ENCODE measurements at regions of chr17 and their contacts with region 1.

Region 1: GRCh38 chr17:10705727-10706126 is 8.3 kb downstream of the ADPRM start:
- DNase-seq: no peak
- H3K4me3 ChIP-seq: no peak overlapping the region
- H3K27ac ChIP-seq: no peak overlapping the region
- H3K4me1 ChIP-seq: peaks cover 6 to 9% of the 10 kb centered on the region in 2 donors
- H3K27me3 ChIP-seq: no peaks in the 10 kb centered on the region
- CTCF ChIP-seq: no peak
- POLR2A ChIP-seq: no peak

Region 2: DNA sequence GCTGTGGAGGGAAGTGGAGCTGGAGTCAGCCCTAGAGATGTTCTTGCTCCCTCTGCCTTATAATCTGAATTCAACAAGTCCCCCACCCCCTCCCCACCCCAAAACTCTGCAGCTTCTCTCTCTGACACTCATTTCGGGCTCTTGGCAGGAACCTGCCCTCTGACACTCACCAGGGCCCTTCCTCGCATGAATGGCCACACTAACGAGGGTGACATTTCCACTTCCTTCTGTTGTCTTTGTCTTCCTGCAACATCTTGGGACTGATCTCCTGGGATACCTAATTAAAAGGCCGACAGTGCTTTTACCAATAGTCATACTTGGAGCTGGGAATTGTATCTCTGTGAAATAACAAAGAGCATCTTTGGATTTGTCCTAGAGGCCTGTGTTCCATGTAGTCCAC is 239.1 kb after region 1 on chr17:
- intact Hi-C with region 1: no loop called
- DNase-seq: no peak
- H3K4me3 ChIP-seq: no peak overlapping the region
- H3K27ac ChIP-seq: no peak overlapping the region
- H3K4me1 ChIP-seq: no peaks in the 10 kb centered on the region
- H3K27me3 ChIP-seq: no peaks in the 10 kb centered on the region
- CTCF ChIP-seq: no peak
- POLR2A ChIP-seq: no peak

Region 3: GRCh38 chr17:11318207-11318606 is 612.5 kb after region 1 on chr17:
- intact Hi-C with region 1: loop called (anchors 5 kb)
- DNase-seq: no peak
- H3K4me3 ChIP-seq: no peak overlapping the region
- H3K27ac ChIP-seq: no peak overlapping the region
- H3K4me1 ChIP-seq: no peaks in the 10 kb centered on the region
- H3K27me3 ChIP-seq: no peaks in the 10 kb centered on the region
- CTCF ChIP-seq: no peak
- POLR2A ChIP-seq: no peak